ENCODE measurements at regions of chr18 and their contacts with region 1.

Region 1: DNA sequence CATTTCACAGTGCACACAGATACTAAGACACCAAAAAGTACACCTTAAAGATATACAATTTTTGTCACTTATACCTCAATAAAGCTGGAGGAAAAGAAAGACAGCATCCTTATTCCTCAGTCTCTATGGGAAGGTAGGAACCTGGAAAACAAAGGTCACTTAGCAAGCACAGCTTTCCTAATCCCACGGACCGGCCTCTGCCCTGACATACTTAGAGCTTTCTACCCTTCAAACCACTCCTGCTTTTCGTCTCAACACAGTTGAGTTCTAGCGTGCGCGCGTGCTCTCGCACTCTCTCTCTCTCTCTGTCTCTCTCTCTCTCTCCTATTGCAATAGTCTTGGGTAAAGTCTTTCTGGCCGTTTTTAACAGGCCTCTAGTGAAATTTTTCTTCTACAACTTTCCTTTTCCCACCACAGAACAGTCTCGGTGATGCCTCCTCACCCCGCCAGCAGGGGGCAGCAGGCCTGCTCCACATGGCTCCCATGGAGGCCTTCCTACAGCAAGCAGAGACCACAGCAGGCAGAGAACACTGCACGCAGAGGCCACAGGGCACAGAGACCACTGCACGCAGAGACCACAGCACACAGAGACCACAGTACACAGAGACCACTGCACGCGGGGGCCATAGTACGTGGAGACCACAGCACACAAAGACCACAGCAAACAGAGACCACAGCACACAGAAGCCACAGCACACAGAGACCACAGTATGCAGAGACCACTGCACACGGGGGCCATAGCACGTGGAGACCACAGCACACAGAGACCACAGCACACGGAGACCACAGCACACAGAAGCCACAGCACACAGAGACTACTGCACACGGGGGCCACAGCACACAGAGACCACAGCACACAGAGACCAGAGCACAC is 106.9 kb downstream of the FBXO15 start:
- DNase-seq: peak; percentile 4
- ATAC-seq: peak; percentile 97
- H3K4me3 ChIP-seq: no peak overlapping the region
- H3K27ac ChIP-seq: no peak overlapping the region
- H3K4me1 ChIP-seq: no peaks in the 10 kb centered on the region
- H3K27me3 ChIP-seq: no peaks in the 10 kb centered on the region
- CTCF ChIP-seq: peak; percentile 14 to 82 (median 78); a peak in 4 of 6 replicates
- POLR2A ChIP-seq: no peak
- RAD21 ChIP-seq: peak; percentile 46

Region 2: DNA sequence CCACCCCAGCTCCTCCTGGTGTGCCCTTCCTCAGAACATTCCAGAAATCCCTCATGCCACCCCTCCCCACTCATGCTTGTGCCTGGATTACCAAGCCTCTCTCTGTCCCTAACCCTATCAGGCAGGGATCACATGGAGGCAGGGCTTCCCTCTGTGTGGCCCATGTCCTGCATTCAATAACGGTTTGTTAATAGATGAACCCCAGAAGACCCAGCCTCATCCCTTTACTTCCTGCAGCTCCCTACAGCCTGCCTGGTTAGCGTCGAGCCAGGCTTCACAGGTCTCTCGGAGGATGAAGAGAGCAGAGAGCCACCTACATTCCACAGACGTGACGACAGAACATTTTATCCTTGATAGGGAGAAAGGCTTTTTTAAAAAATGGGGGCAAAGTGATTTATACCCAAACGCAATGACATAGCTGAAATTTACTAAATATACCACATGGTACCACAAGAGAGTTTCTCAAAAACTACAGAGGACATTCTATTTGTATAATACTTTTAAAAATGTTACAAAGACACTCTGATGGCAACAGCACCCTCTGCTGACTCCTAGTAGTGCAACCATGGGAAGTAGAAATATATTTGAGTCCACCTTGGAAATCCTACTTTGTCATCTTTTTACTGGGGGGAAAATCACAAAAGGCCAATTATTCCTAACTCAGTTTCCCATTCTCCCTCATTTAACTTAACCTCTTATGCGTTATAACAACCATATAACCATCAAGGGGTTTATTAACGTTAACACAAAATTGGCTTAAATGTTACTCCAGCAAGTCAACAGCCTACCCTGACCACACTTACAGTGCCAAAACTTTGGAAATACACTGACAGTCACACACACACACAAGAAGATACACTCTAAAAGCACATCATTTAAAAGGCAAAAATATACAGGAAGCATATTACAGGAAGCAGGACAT is 76.2 kb after region 1 on chr18:
- CTCF ChIA-PET with region 1: no interaction called
- POLR2A ChIA-PET with region 1: no interaction called
- RAD21 ChIA-PET with region 1: no interaction called
- intact Hi-C with region 1: loop called (anchors 2 kb)
- DNase-seq: peak; percentile 8
- ATAC-seq: peak; percentile 75
- H3K4me3 ChIP-seq: no peak overlapping the region
- H3K27ac ChIP-seq: no peak overlapping the region
- H3K4me1 ChIP-seq: no peaks in the 10 kb centered on the region
- H3K27me3 ChIP-seq: peaks cover 18% of the 10 kb centered on the region
- CTCF ChIP-seq: peak; percentile 47 to 77 (median 60); a peak in 5 of 6 replicates
- POLR2A ChIP-seq: no peak
- RAD21 ChIP-seq: peak; percentile 54

Region 3: DNA sequence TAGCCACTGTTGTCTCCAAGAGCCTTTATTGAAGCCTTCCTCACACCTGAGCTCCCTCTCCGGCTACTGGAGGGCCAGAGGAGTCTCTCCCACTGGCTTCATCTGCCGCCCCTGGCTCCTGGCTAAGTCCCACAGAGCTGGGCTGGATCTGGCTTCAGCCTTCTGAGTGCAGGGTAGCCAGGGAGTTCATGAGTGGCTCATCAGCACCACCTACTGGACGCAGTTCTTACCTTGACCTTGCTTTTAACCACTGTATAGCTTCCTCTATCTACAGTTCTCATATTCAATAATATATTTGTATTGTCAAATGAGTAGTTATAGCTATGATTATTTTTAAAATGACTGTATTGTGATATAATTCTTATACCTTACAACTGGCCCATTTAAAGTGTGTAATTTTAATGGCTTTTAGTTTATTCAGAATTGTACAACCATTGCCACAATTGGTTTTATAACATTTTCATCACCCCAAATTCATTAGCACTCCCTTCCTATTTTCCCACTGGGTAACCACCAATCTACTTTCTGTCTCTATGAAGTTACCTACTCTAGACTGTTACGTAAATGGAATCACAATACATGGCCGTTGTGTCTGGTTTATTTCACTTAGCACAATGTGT is 511.4 kb after region 1 on chr18:
- CTCF ChIA-PET with region 1: no interaction called
- POLR2A ChIA-PET with region 1: no interaction called
- RAD21 ChIA-PET with region 1: no interaction called
- intact Hi-C with region 1: loop called (anchors 10 kb)
- DNase-seq: peak; percentile 72
- ATAC-seq: peak; percentile 100
- H3K4me3 ChIP-seq: no peak overlapping the region
- H3K27ac ChIP-seq: no peak overlapping the region
- H3K4me1 ChIP-seq: no peaks in the 10 kb centered on the region
- H3K27me3 ChIP-seq: peaks cover 18% of the 10 kb centered on the region
- CTCF ChIP-seq: peak; percentile 67 to 80 (median 77)
- POLR2A ChIP-seq: no peak
- RAD21 ChIP-seq: peak; percentile 77